Colonic mucosa (tissue), 4 donors: ENCODE measurements at regions of chr9 and their contacts with region 1.

Region 1: GRCh38 chr9:32526041-32526706 is at the start of gene RIGI:
- DNase-seq: peak; percentile 97
- H3K4me3 ChIP-seq: peak within 1 kb of the TSS; percentile 66
- H3K27ac ChIP-seq: peak within 1 kb of the TSS; percentile 93
- H3K4me1 ChIP-seq: peaks cover 3% of the 10 kb centered on the region
- H3K27me3 ChIP-seq: no peaks in the 10 kb centered on the region
- CTCF ChIP-seq: peak; percentile 45
- total RNA-seq, gene RIGI: 3.0 to 8.5 TPM

Region 2: DNA sequence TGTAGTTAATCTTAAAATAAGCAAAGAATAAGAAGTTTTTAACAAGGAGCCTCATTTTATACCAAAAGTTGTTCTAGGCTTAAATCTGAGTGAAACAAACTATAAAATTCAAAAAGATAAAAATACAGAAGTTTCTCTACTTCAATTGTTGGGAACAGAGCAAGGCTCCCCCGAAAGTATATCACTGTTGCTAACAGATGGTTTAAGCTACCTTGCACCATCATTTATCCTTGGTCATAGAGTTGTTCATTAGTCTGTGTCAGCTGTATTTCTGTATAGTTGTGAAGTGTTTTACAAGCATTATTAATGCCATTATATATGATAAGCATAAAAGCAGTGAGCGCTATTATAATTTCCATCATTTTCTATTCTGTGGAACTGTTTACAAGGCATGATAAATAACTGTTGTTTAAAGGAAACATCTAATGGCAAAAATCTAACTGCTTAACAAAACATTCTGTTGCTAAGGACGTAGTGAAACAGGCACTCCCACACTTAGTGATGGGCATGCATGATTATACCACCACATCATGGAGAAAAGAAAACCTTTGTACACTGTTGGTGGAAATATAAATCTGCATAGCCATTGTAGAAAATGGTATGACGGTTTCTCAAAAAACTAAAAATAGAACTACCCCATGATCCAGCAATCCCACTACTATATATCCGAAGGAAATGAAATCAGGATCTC is 165.0 kb before region 1 on chr9:
- intact Hi-C with region 1: no loop called
- DNase-seq: no peak
- H3K4me3 ChIP-seq: no peak overlapping the region
- H3K27ac ChIP-seq: no peak overlapping the region
- H3K4me1 ChIP-seq: no peaks in the 10 kb centered on the region
- H3K27me3 ChIP-seq: no peaks in the 10 kb centered on the region
- CTCF ChIP-seq: no peak

Region 3: DNA sequence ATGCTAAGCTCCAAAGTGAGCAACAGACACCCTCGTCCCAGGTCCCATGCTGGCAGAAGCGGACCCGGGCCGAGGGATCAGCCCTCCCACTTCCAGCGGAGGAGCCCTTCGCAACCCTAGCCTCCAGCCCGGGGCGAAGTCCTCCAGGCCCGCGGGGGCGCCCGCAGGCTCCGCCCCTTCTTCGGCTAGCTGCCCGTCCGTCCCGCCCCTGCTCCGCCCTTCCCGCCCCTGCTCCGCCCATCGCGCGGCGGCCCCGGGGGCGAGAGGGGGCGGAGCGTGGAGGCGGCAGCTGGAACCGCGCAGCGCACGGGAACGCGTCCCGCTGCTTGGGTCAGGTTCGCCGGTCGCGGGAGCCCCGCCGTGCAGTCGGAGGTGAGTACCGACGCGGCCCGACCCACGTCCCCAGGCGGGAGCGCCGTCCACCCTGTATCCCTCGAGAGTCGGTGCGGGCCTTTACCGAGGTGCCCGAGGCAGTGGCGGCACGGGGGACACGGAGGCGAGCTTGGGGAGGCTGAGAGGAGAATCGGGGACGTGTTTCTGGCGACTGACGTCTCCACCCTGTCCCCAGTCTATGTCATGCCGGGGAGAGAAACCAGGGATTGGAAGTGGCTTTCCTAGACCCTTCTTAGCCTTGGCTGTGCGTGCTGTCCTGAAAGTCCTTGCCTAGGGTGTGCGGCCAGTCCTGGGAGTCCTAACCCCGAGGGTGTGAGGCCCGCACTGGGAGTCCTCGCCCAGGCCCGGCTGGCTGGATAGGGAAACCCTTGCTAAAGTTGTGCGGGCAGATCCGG is 141.6 kb before region 1 on chr9 and contains the start of gene ACO1:
- intact Hi-C with region 1: loop called (anchors 5 kb)
- DNase-seq: peak; percentile 93
- H3K4me3 ChIP-seq: peak within 1 kb of the TSS; percentile 89
- H3K27ac ChIP-seq: peak within 1 kb of the TSS; percentile 79
- H3K4me1 ChIP-seq: no peaks in the 10 kb centered on the region
- H3K27me3 ChIP-seq: no peaks in the 10 kb centered on the region
- CTCF ChIP-seq: no peak
- total RNA-seq, gene ACO1: 35.0 to 50.8 TPM

Region 4: GRCh38 chr9:32677931-32678330 is 151.8 kb after region 1 on chr9:
- intact Hi-C with region 1: no loop called
- DNase-seq: no peak
- H3K4me3 ChIP-seq: no peak overlapping the region
- H3K27ac ChIP-seq: no peak overlapping the region
- H3K4me1 ChIP-seq: no peaks in the 10 kb centered on the region
- H3K27me3 ChIP-seq: no peaks in the 10 kb centered on the region
- CTCF ChIP-seq: no peak